ENCODE measurements at regions of chr9 and their contacts with region 1.

Region 1: DNA sequence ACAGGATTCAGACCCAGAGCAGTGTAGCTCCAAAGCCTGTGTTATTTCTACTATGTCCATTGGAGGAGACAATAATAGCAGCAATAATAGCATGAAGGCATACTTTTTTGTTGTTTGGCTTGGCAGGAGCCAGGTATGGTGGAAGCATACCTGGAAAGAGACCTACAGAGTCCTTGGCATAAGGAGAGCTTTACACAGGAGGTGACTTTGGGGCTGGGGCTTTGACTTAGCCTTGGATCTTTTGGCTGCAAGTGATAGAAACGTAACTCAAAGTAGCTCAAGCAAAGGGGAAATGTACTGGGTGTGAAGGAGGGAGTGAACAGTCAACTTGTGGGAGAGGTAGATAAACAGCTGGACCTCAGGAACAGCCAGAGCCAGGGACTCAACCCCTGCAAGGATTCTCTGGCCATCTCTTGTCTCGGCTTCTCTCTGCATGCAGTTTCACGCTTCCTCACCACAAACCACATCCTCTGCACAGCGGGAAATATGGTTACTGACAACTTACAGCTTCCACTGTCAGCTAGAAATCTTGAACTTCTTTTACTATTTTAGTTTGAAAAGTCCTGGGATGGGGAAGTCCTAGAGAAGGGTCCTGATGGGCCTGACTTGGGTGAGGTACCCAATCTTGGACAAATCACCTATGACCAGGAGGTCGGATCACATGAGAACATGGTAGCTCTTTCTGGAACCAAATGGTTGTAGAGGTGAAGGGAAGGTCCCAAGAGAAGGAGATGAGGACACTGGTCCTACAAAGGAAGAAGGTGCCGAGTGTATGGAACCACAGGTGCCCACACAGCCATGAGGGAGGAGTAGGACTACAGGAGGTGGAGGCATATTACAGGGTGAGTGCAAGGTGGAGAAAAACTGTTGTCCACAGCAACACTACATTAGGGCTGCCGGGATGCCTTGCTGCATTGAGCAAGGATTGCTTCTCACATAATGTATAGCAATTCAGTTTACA is 47.0 kb upstream of the TGFBR1 start:
- DNase-seq: peak; percentile 94
- H3K4me3 Mint-ChIP-seq: peak overlapping the region; percentile 77
- H3K27ac Mint-ChIP-seq: peak overlapping the region; percentile 82
- H3K4me1 Mint-ChIP-seq: peaks cover 68% of the 10 kb centered on the region
- H3K27me3 Mint-ChIP-seq: no peaks in the 10 kb centered on the region

Region 2: GRCh38 chr9:97978371-97979130 is 1079.4 kb before region 1 on chr9:
- intact Hi-C with region 1: no loop called
- DNase-seq: no peak
- H3K4me3 Mint-ChIP-seq: no peak overlapping the region
- H3K27ac Mint-ChIP-seq: no peak overlapping the region
- H3K4me1 Mint-ChIP-seq: peaks cover 17% of the 10 kb centered on the region
- H3K27me3 Mint-ChIP-seq: peaks cover 3% of the 10 kb centered on the region

Region 3: DNA sequence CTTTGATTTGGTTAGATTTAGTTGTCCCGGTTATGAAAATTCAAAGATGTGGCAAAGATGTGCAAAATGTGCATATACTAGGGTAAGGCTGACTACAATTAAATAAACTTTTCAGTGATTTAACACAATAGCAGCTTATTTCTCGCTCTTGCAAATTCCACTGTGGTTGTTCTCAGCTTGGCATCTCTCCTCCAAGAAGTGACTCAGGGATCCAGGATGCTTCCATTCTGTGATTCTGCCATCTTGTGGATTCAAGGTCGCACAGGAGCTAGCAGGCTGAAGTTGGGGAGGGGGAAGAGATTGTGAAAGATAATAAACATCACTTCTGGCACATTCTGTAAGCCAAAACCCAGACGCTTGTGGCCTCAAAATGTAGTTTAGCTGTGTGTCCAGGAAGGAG is 13.1 kb before region 1 on chr9:
- intact Hi-C with region 1: loop called (anchors 2 kb)
- DNase-seq: no peak
- H3K4me3 Mint-ChIP-seq: no peak overlapping the region
- H3K27ac Mint-ChIP-seq: no peak overlapping the region
- H3K4me1 Mint-ChIP-seq: peaks cover 55% of the 10 kb centered on the region
- H3K27me3 Mint-ChIP-seq: no peaks in the 10 kb centered on the region

Region 4: DNA sequence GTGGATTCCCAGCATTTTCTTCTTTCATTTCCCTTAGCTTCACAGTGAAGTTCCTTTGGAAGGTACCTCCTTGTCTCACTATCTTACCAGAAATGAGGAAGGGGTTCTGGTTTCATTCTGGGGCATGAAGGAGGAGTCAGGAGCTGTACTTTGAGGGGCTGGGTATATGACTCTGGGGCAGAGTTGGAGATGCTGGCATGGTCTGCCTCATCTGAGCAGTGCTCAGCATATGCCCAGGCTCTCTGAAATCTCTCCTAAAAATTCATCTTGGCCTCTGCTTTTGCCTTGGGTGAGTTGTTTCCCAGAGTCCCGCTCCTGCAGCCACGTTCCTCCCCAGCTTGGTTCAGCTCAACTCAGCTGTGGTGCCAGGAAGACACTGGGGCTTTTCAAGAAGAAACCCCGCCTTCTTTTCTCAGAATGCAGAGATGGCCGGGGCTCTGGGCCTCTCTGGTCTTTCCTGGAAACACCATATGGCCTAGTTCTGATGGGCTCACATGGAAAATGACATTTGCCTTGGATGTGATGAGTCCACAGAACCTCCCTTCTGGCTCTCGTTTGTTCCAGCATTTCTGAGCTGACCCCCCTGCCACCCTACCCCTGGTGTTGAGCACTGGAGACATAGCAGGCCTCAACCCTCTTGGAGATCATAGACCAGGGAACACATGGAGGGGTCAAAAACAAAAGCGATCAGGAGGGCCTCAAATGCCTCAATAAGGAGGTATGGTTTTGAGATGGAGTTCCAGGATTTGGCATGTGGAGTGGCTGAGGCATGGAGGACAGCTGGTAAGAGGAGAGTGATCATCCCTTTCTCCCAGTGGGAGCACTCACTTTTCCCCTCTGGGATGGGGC is 34.9 kb after region 1 on chr9:
- intact Hi-C with region 1: loop called (anchors 2 kb)
- DNase-seq: peak; percentile 88
- H3K4me3 Mint-ChIP-seq: peak overlapping the region; percentile 74
- H3K27ac Mint-ChIP-seq: peak overlapping the region; percentile 95
- H3K4me1 Mint-ChIP-seq: peaks cover 65% of the 10 kb centered on the region
- H3K27me3 Mint-ChIP-seq: no peaks in the 10 kb centered on the region

Region 5: GRCh38 chr9:99118782-99119466 is 61.0 kb after region 1 on chr9:
- intact Hi-C with region 1: loop called (anchors 2 kb)
- DNase-seq: peak; percentile 87
- H3K4me3 Mint-ChIP-seq: peak overlapping the region; percentile 81
- H3K27ac Mint-ChIP-seq: peak overlapping the region; percentile 90
- H3K4me1 Mint-ChIP-seq: peaks cover 57% of the 10 kb centered on the region
- H3K27me3 Mint-ChIP-seq: no peaks in the 10 kb centered on the region

Region 6: GRCh38 chr9:100084734-100085133 is 1026.8 kb after region 1 on chr9:
- intact Hi-C with region 1: loop called (anchors 10 kb)
- DNase-seq: no peak
- H3K4me3 Mint-ChIP-seq: peak overlapping the region; percentile 27
- H3K27ac Mint-ChIP-seq: no peak overlapping the region
- H3K4me1 Mint-ChIP-seq: peaks cover 49% of the 10 kb centered on the region
- H3K27me3 Mint-ChIP-seq: no peaks in the 10 kb centered on the region

Measured in activated CD4-positive, alpha-beta T cell treated with anti-CD3 and anti-CD28 coated beads, Interleukin-2, amount 10 ng/mL, durations not matched to agents 24 days and 14 days (primary cell).